ENCODE measurements at regions of chr11 and their contacts with region 1.

Region 1: DNA sequence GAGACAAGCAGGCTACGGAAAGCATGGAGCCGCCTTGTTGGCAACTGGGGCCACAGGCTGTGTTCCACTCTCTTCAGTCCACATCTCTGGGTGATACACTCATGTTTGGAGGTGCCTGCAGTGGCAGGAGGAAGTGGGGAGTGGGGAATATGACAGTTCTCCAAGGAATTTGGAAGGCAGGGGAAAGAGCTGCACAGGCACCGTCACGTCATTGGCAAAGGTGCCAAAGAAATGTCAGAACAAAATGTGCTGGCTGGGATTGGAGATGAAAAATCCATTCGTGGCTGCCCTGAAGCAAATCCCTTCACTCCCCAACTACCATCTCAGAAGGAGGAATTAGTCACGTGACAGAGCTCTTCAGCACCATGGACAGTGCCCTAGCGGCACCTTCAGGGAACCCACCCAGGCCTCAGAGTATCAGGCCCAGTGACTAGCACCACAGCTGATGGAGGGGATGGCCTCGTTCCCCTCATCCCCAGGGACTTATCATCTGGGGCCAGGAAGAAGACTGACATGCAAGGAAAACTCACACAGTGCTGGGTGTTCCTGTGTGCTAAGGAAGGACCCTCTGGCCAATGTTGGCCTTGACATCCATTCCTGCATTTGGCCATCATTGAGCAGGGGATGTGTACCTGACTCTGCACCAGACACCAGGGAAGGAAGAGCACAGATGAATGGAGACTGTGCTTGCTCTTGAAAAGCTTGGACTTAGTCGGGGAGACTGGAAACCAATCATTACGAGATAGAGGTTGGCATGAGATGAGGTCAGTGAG is 48.5 kb upstream of the PRDM11 start:
- DNase-seq: peak; percentile 58 to 68
- H3K4me3 ChIP-seq: no peak overlapping the region
- H3K27ac ChIP-seq: no peak overlapping the region
- H3K4me1 ChIP-seq: peaks cover 0 to 7% of the 10 kb centered on the region in 2 donors
- H3K27me3 ChIP-seq: no peaks in the 10 kb centered on the region
- CTCF ChIP-seq: no peak
- POLR2A ChIP-seq: no peak

Region 2: GRCh38 chr11:45045683-45046471 is 52.0 kb before region 1 on chr11:
- intact Hi-C with region 1: loop called (anchors 10 kb)
- DNase-seq: peak; percentile 14 to 21
- H3K4me3 ChIP-seq: no peak overlapping the region
- H3K27ac ChIP-seq: peak overlapping the region; percentile 15 to 63 (median 41)
- H3K4me1 ChIP-seq: peaks cover 6 to 29% of the 10 kb centered on the region in 2 donors
- H3K27me3 ChIP-seq: no peaks in the 10 kb centered on the region
- CTCF ChIP-seq: no peak
- POLR2A ChIP-seq: no peak

Region 3: DNA sequence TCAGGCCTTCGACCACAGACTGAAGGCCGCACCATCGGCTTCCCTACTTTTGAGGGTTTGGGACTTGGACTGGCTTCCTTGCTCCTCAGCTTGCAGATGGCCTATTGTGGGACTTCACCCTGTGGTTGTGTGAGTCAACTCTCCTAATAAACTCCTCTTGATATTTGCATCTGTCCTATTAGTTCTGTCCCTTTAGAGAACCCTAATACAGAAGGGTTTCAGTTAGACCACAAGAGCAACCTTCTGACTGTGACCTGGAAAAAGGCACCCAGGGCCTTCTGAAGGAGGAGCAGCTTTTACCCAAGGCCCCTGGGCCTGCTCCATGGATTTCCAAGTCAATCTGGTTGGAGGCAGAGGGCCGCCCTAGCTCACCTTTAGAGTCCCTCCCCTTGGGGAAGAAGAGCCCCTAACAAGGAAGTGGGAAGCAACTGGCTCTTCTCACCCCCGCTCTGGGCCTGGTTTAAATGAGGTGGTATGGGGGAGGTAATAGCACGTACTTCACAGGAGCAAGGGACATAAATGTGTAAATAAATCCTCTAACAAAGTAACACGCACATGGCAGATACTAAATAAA is 578.7 kb after region 1 on chr11:
- intact Hi-C with region 1: no loop called
- DNase-seq: no peak
- H3K4me3 ChIP-seq: no peak overlapping the region
- H3K27ac ChIP-seq: no peak overlapping the region
- H3K4me1 ChIP-seq: peaks cover 16 to 17% of the 10 kb centered on the region in 2 donors
- H3K27me3 ChIP-seq: no peaks in the 10 kb centered on the region
- CTCF ChIP-seq: no peak
- POLR2A ChIP-seq: no peak

Measured in thyroid gland (tissue), 4 donors.